ENCODE measurements at regions of chr11 and their contacts with region 1.

Region 1: DNA sequence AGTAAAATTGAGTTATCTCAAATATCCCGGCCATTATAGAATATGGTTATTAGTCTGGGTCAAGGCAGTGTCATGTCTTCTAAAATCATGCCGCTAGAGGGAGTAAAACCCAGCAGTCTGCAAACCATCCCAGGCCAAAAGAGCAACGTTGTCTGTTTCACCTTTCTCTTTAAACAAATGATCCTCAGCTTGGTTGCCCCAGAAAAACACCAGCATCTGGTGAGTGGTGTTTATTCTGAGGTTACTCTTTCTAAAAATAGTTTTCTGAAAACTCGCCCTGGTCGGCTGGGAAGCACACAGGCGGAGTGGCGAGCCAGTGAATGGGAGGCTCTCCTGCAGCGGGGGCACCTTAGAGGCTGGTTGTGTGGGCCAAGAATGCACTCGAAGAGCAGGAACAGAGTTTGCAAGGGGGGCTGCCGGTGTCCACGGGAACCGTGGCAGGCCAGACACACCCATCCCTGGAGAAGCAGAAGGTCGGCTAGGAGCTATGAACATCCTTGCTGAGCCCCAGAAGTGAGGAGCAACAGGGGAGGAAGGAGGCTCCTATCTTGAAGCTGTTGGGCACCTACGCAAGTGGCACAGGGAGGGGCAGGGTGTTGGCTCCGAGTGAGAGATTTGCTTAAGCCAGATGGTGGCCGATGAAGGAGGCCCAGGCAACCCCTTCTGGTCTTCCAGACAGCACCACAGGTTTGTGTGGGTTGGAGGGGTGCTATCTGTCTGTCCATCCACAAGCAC is 297.1 kb downstream of the ETS1 start:
- DNase-seq: peak; percentile 86
- ATAC-seq: peak; percentile 70
- H3K4me3 Mint-ChIP-seq: peak overlapping the region; percentile 86
- H3K27ac Mint-ChIP-seq: peak overlapping the region; percentile 92
- H3K4me1 Mint-ChIP-seq: peaks cover 86% of the 10 kb centered on the region
- H3K27me3 Mint-ChIP-seq: no peaks in the 10 kb centered on the region

Region 2: GRCh38 chr11:128214263-128214662 is 76.0 kb before region 1 on chr11:
- CTCF ChIA-PET with region 1: no interaction called
- DNase-seq: no peak
- ATAC-seq: no peak
- H3K4me3 Mint-ChIP-seq: no peak overlapping the region
- H3K27ac Mint-ChIP-seq: no peak overlapping the region
- H3K4me1 Mint-ChIP-seq: no peaks in the 10 kb centered on the region
- H3K27me3 Mint-ChIP-seq: no peaks in the 10 kb centered on the region

Region 3: GRCh38 chr11:128302425-128303186 is 12.3 kb after region 1 on chr11:
- CTCF ChIA-PET with region 1: interaction called, 68 read pairs
- DNase-seq: peak; percentile 88
- ATAC-seq: peak; percentile 91
- H3K4me3 Mint-ChIP-seq: peak overlapping the region; percentile 90
- H3K27ac Mint-ChIP-seq: peak overlapping the region; percentile 98
- H3K4me1 Mint-ChIP-seq: peaks cover 74% of the 10 kb centered on the region
- H3K27me3 Mint-ChIP-seq: no peaks in the 10 kb centered on the region

Region 4: GRCh38 chr11:128465946-128466705 is 175.9 kb after region 1 on chr11:
- CTCF ChIA-PET with region 1: interaction called, 11 read pairs
- DNase-seq: no peak
- ATAC-seq: peak; percentile 5
- H3K4me3 Mint-ChIP-seq: peak overlapping the region; percentile 62
- H3K27ac Mint-ChIP-seq: peak overlapping the region; percentile 82
- H3K4me1 Mint-ChIP-seq: peaks cover 89% of the 10 kb centered on the region
- H3K27me3 Mint-ChIP-seq: no peaks in the 10 kb centered on the region

Region 5: DNA sequence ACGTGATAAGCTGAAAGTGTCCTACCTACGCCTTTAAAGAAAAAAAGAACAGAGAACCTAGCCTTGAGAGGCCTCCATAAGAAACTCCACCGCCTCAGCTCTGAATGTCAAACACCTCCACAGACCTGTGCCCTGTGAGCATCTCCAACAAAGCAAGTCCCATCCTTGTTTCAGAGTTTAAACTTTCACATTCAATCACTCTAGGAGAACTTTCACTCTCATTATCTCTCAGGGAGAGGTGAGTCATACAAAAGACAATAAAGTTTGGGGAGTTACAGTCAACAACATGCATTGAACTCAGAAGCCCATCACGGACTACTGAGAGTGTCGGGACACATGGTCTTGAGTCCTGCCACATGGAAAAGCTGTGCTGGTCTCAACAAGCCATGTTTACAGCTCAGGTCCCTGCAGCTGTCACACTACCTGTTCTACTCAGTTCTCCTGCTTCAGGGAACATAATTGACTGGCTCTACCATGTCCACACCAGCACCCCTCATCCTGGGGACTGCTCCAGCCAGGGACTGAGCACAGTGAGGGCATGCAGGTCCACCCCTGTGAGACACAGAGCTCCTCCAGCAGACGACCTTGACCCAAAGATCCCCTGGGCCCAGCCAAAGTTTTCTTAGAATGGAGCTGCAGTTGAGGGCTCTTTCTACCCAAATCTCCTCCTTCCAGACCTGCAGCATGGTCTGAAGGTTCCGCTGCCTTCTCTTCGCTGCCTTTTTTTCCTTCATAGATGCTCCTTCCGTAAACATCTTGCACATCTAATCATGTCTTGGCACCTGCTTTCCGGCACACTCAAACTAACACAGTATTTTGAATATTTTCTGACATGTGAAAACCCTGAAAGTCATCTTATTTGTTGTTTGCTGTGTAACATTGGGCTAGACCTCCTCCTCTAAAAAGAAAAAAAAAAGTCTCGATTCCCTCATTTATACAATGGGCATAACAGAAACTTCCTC is 182.1 kb after region 1 on chr11:
- CTCF ChIA-PET with region 1: interaction called, 23 read pairs
- DNase-seq: peak; percentile 71
- ATAC-seq: peak; percentile 69
- H3K4me3 Mint-ChIP-seq: peak overlapping the region; percentile 59
- H3K27ac Mint-ChIP-seq: peak overlapping the region; percentile 95
- H3K4me1 Mint-ChIP-seq: peaks cover 95% of the 10 kb centered on the region
- H3K27me3 Mint-ChIP-seq: no peaks in the 10 kb centered on the region

Region 6: GRCh38 chr11:128506999-128507611 is 216.8 kb after region 1 on chr11:
- CTCF ChIA-PET with region 1: interaction called, 34 read pairs
- DNase-seq: no peak
- ATAC-seq: peak; percentile 17
- H3K4me3 Mint-ChIP-seq: peak overlapping the region; percentile 99
- H3K27ac Mint-ChIP-seq: peak overlapping the region; percentile 86
- H3K4me1 Mint-ChIP-seq: peaks cover 97% of the 10 kb centered on the region
- H3K27me3 Mint-ChIP-seq: no peaks in the 10 kb centered on the region

Region 7: DNA sequence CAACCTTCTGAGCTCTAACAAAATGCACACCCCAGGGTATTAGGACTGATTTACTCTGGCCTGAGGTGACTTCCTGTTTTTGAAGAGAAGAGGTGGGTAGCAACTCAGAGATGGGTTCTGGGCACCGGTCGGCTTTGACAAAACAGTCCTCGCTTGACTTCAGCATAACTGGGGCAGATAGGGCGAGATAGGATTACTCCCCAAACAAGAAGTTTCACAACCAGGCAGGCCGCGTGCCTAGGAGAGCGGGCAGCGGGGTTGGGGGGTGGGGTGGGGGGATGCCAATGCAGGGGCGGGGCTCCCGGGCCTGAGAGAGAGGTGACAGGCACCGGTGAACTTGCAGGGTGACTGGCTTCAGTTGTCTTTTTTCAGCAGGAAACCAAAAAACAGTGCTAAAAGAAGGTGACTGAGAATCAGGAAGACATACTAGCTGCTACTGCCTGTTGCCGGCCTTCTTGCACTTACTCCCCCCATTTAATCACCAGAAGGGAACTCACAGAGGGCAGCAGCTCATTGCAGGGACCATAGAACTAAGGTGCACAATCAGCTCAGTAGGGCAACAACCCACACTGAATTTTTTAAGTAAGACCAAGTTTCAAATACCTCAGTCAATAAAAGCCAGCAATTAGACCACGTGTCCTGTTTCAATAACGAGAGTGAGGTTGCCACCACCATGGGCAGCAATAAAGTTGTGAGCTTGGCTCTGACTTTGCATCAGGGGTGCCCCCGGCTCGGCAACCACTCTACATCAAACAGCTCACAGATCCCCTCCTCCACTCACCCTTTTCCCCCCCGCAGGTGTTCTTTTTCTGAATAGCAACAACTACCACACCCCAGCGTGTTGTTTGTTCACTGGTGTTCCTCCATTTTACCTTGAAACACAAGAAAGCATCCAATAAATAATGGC is 334.2 kb after region 1 on chr11:
- CTCF ChIA-PET with region 1: interaction called, 92 read pairs
- DNase-seq: peak; percentile 78
- ATAC-seq: peak; percentile 62
- H3K4me3 Mint-ChIP-seq: peak overlapping the region; percentile 60
- H3K27ac Mint-ChIP-seq: peak overlapping the region; percentile 94
- H3K4me1 Mint-ChIP-seq: peaks cover 75% of the 10 kb centered on the region
- H3K27me3 Mint-ChIP-seq: no peaks in the 10 kb centered on the region

Measured in activated CD8-positive, alpha-beta memory T cell treated with anti-CD3 and anti-CD28 coated beads, Interleukin-2, amount 10 ng/mL, durations not matched to agents 7 days and 5 days (primary cell).